Activated T-helper 2 cell treated with anti-CD3 and anti-CD28 coated beads, Interferon-gamma antibody, Interleukin-2, Interleukin-4, amounts not matched to agents 10 μg/mL and 5 μg/mL and 100 μg/mL, durations not matched to agents 14 hours and 24 hours and 36 hours (primary cell): ENCODE measurements at regions of chr17 and their contacts with region 1.

Region 1: GRCh38 chr17:45277216-45277849 is 15.4 kb upstream of the SPATA32 start:
- DNase-seq: peak; percentile 80
- H3K4me3 Mint-ChIP-seq: no peak overlapping the region
- H3K27ac Mint-ChIP-seq: peak overlapping the region; percentile 63
- H3K4me1 Mint-ChIP-seq: peaks cover 14% of the 10 kb centered on the region
- H3K27me3 Mint-ChIP-seq: no peaks in the 10 kb centered on the region

Region 2: DNA sequence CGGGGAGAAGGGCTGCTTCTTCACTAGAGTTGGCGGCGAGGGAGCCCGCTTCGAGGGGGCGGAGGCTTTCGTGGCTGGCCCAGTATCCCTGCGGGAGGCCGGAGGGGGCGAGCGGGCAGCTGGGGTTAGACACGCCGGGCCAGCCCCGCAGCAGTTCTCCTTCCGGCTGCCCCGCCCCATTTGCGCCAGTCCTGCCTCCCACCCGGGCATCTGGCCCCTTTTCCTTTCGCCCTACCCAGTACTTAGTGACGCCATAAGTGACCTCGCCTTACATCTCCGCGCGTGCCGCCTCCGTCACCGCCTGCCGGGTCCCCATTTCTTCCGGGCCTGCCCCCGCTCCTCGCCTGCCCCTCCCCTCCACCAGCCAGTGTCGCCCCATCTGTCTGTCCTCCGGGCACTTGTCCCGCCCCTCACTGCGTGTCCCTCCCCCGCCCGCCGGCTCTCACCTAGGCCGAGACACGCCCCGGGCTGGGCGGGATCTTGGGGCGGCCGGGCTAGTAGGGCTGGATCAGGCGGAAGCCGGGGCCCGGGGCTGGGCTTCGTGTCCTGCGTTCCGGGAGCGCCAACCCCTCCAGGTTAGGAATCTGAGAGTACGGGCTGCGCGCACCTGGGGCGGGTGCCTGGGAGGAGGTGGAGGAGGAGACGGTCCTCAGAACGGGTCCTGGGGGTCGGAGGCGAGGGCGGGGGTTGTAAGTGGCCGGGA is 29.8 kb before region 1 on chr17:
- intact Hi-C with region 1: loop called (anchors 1 kb)
- DNase-seq: peak; percentile 95
- H3K4me3 Mint-ChIP-seq: peak overlapping the region; percentile 91
- H3K27ac Mint-ChIP-seq: peak overlapping the region; percentile 91
- H3K4me1 Mint-ChIP-seq: peaks cover 53% of the 10 kb centered on the region
- H3K27me3 Mint-ChIP-seq: no peaks in the 10 kb centered on the region

Region 3: DNA sequence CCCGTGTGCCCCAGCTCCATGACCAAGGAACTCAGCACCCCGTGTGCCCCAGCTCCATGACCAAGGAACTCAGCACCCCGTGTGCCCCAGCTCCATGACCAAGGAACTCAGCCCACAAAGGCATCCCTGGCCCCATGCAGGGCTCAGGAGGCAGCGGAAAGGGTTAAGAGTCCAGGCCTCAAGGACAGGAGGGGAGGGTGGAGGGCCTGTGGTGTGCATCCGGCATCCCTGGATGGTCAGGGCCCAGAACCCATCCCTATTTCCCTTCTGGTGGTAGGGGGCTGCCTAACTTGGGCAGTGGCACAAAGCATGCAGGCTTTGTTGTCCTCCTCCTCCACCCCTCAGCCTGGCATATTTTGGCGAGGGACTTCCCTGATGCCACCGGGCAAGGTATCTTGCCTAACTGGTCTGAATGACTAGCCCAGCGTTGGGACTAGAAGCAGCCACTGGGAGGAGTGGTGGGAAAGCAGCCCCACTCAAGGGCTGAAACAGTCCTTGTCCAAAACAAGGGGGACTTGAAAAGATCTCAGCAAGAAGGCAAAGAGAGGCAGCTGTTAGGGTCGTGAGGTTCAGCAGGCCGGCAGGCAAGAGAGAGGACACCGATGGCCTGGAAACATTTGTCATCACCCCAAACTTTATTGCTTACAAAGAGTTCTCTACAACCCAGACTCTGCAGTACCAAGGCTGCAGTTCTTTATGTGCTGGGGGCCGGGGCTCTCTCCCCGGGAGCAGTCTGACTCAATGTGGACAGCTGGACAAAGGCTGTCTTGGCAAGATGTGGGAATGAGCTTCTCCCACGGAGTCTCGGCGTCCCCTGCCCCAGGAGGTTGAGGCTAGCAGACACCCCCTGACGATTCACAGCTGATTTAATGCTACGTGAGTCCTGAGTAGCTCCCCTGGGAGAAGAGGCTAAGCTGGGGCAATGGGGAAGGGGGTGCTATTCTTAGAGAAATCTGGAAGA is 14.5 kb before region 1 on chr17:
- intact Hi-C with region 1: no loop called
- DNase-seq: no peak
- H3K4me3 Mint-ChIP-seq: peak overlapping the region; percentile 50
- H3K27ac Mint-ChIP-seq: peak overlapping the region; percentile 40
- H3K4me1 Mint-ChIP-seq: peaks cover 22% of the 10 kb centered on the region
- H3K27me3 Mint-ChIP-seq: no peaks in the 10 kb centered on the region

Region 4: DNA sequence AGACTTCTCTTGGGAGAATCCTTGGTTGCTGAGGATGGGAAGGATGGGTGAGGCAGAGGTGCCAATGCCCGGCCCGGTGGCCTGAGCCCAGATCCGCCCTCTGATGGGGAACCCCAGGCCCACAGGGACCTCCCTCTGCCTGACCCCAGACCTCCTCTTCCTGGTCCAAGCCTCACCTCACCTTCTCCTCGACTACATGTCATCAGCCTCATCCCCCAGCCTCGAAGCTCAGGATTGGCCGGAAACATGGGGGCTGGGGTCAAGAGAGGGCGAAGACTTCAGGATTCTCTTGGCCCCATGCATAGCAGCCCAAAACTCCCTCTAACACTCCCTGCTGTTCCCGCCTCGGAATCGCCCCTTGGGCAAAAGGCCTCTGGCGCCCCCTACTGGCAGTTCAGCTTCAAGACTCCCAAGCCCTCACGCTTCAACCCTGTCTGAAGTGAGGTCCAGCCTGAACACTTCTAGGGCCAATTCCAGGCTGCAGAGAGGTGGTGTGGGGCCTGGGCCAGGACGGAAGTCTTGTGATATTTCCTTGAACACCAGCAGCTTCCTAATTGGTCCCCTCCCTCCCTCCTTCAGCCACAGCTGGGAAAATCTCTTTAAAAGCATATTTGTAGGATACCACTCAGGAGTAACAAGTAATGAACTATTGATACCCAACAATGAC is 108.1 kb after region 1 on chr17:
- intact Hi-C with region 1: loop called (anchors 1 kb)
- DNase-seq: peak; percentile 79
- H3K4me3 Mint-ChIP-seq: no peak overlapping the region
- H3K27ac Mint-ChIP-seq: peak overlapping the region; percentile 69
- H3K4me1 Mint-ChIP-seq: peaks cover 22% of the 10 kb centered on the region
- H3K27me3 Mint-ChIP-seq: peaks cover 2% of the 10 kb centered on the region